ENCODE measurements at regions of chr11 and their contacts with region 1.

Region 1: GRCh38 chr11:78045851-78046485 is 17.7 kb upstream of the THRSP start:
- DNase-seq: peak; percentile 89
- CTCF ChIP-seq: peak; percentile 96

Region 2: DNA sequence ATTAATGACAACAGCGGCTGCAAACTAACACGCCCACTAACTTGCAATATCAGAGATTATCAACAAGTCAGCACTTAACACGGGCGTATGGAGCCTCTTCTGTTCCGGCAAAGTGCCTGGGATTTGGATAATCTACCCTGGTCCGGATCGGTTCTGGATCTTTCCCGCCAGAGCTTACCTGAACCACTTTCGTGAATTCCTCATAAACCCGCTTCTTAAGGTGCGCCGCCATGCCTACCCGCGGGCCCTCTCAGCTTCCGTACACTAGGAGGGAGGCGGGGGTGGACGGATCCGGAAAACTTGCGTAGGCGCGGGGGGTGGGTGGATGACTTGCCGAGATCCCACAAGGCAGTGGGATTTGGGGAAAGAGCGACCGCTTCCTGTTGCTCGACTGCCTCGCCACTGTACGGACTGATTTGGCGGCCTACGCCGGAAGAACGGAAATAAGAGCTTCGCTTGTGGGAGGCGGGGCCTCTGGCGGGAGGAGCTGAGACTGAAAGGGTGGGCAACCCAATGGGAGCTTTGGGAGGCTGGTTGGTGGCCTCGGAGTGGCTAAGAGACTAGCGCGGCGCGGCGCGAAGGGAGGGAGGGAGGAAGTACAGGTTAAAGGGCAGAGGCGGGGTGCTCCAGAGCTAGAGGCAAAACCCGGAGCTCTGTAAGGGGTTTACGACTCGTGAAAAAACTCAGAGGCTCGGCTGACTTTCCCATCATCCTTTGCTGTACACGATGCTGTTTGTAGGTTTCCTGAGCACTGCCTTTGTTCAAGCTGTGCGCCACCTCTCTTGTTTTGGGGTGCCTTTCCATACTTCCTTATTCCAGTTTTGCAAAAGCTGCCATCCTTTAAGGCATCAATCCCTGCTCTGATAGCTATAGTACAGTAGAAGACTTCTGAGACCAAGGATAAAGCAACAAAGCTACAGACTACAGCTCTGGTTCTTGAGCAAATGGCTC is 51.3 kb before region 1 on chr11 and contains the start of gene INTS4:
- CTCF ChIA-PET with region 1: interaction called, 12 read pairs
- POLR2A ChIA-PET with region 1: interaction called, 4 read pairs
- DNase-seq: peak; percentile 95
- CTCF ChIP-seq: no peak

Region 3: DNA sequence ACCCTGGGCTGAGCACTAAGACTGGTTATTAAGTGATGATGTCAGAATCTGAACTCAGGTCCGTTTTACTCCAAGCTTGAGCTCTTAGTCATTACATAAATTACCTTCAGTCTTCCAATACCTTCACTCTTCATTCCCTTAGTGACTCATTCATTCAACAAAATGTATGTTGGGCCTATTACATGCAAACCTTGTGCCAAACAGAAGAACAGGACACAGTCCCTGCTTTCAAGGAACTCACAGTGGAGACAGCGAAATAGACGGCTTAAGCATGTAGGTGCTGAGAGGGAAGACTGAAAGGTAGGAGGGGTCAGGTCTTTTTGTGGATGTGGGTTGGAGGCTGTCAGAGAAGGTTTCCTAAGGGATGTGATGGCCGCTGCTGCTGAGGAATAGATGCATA is 26.1 kb before region 1 on chr11:
- CTCF ChIA-PET with region 1: interaction called, 13 read pairs
- POLR2A ChIA-PET with region 1: no interaction called
- DNase-seq: no peak
- CTCF ChIP-seq: no peak

Region 4: DNA sequence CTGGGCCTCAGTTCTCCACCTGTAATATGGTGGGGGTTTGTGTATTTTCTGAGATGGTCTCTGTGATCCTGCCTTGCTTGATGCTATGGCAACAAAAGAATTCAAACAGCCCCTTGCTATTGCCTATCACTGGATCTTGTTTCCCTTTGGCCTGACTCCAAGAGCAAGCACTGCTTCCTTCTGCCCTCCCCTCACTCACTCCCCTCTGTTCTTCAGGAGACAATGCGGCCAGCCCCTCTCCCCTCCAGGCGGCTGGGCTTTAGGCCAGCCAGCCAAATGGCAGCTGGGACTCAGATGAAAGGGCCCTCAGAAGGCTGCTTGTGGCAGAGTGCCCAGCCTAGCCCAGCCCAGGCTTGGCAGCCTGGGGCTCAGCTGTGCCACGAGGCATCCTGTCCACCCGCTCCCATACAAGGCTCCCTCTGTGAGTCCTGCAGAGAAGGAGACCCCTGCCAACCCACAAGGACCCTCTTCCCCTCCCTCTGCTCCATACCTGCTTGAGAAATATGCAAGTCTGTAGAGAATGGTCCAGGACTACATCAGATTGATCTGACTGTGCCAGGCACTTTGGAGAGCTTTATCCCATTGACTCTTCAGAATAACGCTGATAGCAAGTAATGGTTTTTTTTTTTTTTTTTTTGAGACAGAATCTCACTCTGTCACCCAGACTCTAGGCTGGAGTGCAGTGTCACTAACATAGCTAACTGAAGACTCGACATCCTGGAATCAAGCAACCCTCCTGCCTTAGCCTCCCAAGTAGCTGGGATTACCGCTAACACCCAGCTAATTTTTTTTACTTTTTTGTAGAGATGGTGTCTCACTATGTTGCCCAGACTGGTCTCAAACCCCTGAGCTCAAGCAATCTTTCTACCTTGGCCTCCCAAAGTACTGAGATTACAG is 15.3 kb before region 1 on chr11:
- CTCF ChIA-PET with region 1: interaction called, 89 read pairs
- POLR2A ChIA-PET with region 1: interaction called, 4 read pairs
- DNase-seq: no peak
- CTCF ChIP-seq: no peak

Region 5: GRCh38 chr11:78605296-78605695 is 559.3 kb after region 1 on chr11:
- CTCF ChIA-PET with region 1: no interaction called
- POLR2A ChIA-PET with region 1: no interaction called
- DNase-seq: no peak
- CTCF ChIP-seq: no peak